PC-3 (cell line): ENCODE measurements at regions of chr1 and their contacts with region 1.

Region 1: DNA sequence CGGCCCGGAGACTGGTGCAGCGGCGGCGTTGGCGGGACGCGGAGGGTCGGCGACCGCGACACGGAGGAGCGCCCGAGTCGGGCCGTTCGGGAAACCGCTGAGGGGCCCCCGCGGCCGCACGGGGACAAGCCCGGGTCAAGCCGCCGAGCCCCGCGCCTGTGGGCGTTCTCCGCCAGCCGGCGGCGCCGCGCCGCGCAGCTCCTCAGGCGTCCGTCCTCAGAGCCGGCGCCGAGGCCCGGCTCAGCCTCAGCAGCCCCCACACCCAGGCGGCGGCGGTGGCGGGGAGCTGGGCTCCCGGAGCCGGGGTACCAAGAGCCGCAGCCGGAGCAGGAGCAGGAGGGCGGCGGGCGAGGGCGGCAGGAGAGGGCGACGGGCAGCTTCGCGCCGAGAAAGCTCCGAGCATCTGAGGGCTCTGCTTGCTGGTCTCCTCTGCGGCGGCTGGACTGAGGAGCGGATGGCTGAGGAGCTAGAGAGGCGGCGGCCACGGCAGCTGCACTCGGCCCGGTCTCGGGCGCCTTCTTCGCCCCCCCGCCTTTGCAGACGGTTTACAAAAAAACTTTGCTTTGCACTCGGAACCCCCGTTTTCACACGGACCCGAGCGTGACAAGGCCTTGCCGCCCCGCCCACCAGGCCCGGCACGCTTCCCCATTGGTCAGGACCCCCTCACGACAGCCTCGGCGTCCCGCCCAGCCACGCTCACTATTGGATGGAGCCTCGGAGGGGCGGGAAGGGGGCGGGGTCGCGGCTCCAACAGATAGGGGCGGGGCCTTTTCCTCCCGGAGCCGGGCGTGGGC is at the start of gene SLC30A1:
- DNase-seq: peak; percentile 99
- ATAC-seq: peak; percentile 84
- H3K4me3 ChIP-seq: peak within 1 kb of the TSS; percentile 86
- H3K27ac ChIP-seq: peak within 1 kb of the TSS; percentile 24; the same call in 1 of the 2 replicates
- H3K4me1 ChIP-seq: peaks cover 36% of the 10 kb centered on the region
- H3K27me3 ChIP-seq: no peaks in the 10 kb centered on the region
- CTCF ChIP-seq: no peak
- total RNA-seq, gene SLC30A1: 6.7 and 8.2 TPM in 2 replicates

Region 2: GRCh38 chr1:211281320-211282022 is 297.4 kb before region 1 on chr1:
- CTCF ChIA-PET with region 1: no interaction called
- POLR2A ChIA-PET with region 1: no interaction called
- intact Hi-C with region 1: no loop called
- DNase-seq: no peak
- ATAC-seq: peak; percentile 56
- H3K4me3 ChIP-seq: no peak overlapping the region
- H3K27ac ChIP-seq: peak overlapping the region; percentile 23
- H3K4me1 ChIP-seq: peaks cover 6% of the 10 kb centered on the region; the same call in 1 of the 2 replicates
- H3K27me3 ChIP-seq: no peaks in the 10 kb centered on the region
- CTCF ChIP-seq: no peak

Region 3: DNA sequence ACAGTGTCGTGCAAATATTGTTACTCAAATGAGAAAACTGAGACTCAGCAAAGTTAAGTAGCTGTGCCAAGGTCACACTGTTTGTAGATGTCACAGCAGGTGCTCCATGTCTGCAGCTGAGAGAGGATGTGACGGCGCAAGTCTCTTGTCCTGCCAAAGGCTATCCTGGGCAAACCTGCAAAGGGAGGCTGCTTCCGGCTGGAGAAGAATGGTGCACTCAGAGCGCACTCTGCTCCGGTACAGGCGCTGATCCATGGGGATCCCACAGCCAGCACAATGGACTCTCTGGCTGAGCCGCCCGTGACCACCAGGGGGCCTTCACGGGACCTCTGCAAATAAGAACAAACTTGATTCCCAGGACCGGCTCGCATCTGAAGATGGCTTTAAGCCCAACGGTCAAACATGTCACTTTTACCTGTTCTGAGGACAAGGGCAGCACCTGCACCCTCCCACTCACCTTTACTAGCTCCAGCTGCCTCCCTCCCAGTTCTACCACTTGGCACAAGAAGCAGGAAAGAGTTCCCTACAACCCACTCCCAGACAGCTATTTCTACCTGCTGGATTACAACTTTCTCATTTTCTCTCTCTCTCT is 108.8 kb before region 1 on chr1:
- CTCF ChIA-PET with region 1: no interaction called
- POLR2A ChIA-PET with region 1: no interaction called
- intact Hi-C with region 1: loop called (anchors 5 kb)
- DNase-seq: peak; percentile 87
- ATAC-seq: peak; percentile 99
- H3K4me3 ChIP-seq: no peak overlapping the region
- H3K27ac ChIP-seq: no peak overlapping the region
- H3K4me1 ChIP-seq: peaks cover 2% of the 10 kb centered on the region; the same call in 1 of the 2 replicates
- H3K27me3 ChIP-seq: peaks cover 13% of the 10 kb centered on the region
- CTCF ChIP-seq: peak; percentile 96

Region 4: DNA sequence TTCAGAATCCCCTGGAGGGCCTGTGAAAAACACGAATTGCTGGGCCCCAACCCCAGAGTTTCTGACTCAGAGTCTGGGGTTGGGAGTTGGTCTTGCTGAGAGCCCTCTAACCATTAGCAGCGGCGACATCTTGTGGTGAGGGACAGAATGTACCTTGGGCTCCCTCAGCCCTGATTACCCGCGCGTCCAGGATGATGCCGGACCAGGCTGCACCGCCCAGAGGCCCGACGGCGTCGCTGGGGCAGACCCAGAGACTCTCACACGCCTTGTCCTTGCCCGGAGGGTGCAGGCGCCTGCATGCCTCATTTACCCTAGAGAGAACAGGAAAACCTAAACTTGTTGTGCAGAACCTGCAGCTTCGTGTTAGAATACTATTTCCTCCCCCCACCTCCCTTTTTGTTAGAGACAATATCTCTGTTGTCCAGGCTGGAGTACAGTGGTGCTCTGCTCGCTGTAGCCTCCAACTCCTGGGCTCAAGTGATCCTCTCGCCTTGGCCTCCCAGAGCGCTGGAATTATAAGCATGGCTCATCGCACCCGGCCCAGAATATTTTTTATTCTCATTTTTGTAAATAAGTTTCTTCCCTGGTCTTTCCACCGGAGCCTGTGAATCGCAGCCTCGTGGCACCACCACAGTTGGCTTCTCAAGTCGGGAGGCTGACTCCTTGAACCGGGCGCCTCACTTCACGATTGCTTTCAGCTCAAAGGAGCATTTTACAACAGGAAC is 64.6 kb before region 1 on chr1:
- CTCF ChIA-PET with region 1: no interaction called
- POLR2A ChIA-PET with region 1: no interaction called
- intact Hi-C with region 1: loop called (anchors 1 kb)
- DNase-seq: peak; percentile 95
- ATAC-seq: peak; percentile 80
- H3K4me3 ChIP-seq: peak overlapping the region; percentile 21; the same call in 1 of the 2 replicates
- H3K27ac ChIP-seq: no peak overlapping the region
- H3K4me1 ChIP-seq: peaks cover 28% of the 10 kb centered on the region
- H3K27me3 ChIP-seq: no peaks in the 10 kb centered on the region
- CTCF ChIP-seq: peak; percentile 92

Region 5: GRCh38 chr1:211603191-211603701 is 24.4 kb after region 1 on chr1:
- CTCF ChIA-PET with region 1: no interaction called
- POLR2A ChIA-PET with region 1: no interaction called
- intact Hi-C with region 1: no loop called
- DNase-seq: peak; percentile 79
- ATAC-seq: peak; percentile 66
- H3K4me3 ChIP-seq: no peak overlapping the region
- H3K27ac ChIP-seq: peak overlapping the region; percentile 18
- H3K4me1 ChIP-seq: peaks cover 28% of the 10 kb centered on the region
- H3K27me3 ChIP-seq: no peaks in the 10 kb centered on the region
- CTCF ChIP-seq: no peak

Region 6: DNA sequence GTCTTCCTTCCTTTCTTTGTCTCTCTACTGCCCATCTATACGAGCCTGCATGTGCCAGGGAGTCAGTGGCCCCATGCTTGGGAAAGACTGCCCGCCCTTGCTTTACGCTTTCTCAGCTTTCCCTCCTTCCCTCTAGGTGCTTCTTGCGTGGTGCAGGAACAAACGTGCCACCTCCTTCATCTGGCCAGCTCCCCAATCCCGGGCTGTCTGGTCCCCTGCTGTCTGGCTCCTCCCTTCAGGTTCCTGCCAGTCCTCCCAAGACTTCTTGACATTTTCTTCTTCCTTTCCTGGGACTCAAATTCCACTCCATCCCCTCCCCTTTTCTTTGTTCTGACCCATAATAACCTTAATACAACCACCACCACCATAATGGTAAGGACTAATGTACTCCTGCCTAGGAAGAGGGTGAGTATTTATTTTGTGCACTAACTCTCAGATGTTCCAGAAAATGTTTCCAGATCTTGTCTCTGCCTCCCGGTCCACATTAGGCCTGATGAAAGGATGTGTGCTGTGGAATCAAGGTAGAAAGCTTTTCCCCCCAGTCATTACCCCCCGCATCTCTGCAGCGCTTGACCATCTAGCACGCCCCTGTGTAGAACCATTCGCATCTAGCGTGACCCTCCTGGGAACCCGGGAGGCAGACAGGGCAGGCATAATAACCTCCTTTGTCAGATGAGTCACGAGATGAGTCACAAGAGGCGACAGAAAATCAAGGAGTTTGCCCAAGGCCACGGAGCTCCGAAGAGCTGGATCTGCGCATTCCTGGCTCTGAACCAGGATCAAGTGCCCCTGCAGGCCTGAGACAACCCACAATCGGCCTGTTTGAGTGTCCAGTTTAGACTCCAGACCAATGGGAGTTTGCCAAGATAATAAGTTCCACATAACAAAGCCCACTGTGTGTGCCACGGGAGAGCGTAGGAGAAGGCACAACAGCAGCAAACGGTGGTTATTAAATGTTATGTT is 156.7 kb after region 1 on chr1:
- CTCF ChIA-PET with region 1: no interaction called
- POLR2A ChIA-PET with region 1: no interaction called
- intact Hi-C with region 1: loop called (anchors 10 kb)
- DNase-seq: peak; percentile 99
- ATAC-seq: peak; percentile 95
- H3K4me3 ChIP-seq: peak overlapping the region; percentile 44; the same call in 1 of the 2 replicates
- H3K27ac ChIP-seq: peak overlapping the region; percentile 72
- H3K4me1 ChIP-seq: peaks cover 27% of the 10 kb centered on the region
- H3K27me3 ChIP-seq: no peaks in the 10 kb centered on the region
- CTCF ChIP-seq: no peak